WTC11 (cell line): ENCODE measurements at regions of chr1 and their contacts with region 1.

Region 1: DNA sequence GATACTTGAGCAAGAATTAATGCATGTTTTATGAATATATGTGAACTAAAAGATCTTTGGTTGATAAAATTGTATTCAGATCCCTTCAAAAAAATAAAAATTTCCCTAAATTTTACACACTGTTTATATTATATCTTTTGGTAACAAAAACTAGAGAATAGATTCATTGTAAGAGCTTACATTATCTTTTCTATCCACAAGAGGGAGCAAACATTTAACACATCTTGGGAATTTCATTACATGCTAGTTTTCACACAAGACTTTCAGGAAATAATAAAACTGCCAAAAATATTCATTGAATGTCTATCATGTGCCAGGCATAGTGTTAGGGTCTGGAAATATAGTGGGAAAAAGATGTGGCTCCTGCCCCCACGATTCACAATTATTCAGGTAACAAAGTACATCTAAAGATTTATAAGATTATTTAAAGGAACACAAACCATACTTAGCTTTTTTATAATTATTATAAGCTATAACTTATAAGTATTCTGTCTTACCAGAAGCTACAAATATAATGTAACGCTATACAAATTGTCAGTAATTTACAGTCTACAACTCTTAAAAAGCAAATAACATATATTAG is 30.6 kb downstream of the FAF1 start:
- DNase-seq: no peak
- ATAC-seq: no peak
- H3K4me3 Mint-ChIP-seq: no peak overlapping the region
- H3K27ac Mint-ChIP-seq: no peak overlapping the region
- H3K4me1 Mint-ChIP-seq: no peaks in the 10 kb centered on the region; the same call in 1 of the 2 replicates
- H3K27me3 Mint-ChIP-seq: no peaks in the 10 kb centered on the region
- CTCF ChIP-seq: no peak

Region 2: GRCh38 chr1:50959913-50960844 is 30.7 kb after region 1 on chr1 and contains the start of gene FAF1:
- CTCF ChIA-PET with region 1: interaction called, 10 read pairs
- POLR2A ChIA-PET with region 1: no interaction called
- DNase-seq: peak; percentile 98
- ATAC-seq: peak; percentile 93
- H3K4me3 Mint-ChIP-seq: peak within 1 kb of the TSS; percentile 87
- H3K27ac Mint-ChIP-seq: peak within 1 kb of the TSS; percentile 95
- H3K4me1 Mint-ChIP-seq: peaks cover 14% of the 10 kb centered on the region
- H3K27me3 Mint-ChIP-seq: peaks cover 20% of the 10 kb centered on the region
- CTCF ChIP-seq: 0 out of 2 replicates have a peak, but pooled peaks have one; percentile 22
- total RNA-seq, gene FAF1: 50.4 to 53.5 TPM (median 53.5 TPM) in 3 replicates

Region 3: DNA sequence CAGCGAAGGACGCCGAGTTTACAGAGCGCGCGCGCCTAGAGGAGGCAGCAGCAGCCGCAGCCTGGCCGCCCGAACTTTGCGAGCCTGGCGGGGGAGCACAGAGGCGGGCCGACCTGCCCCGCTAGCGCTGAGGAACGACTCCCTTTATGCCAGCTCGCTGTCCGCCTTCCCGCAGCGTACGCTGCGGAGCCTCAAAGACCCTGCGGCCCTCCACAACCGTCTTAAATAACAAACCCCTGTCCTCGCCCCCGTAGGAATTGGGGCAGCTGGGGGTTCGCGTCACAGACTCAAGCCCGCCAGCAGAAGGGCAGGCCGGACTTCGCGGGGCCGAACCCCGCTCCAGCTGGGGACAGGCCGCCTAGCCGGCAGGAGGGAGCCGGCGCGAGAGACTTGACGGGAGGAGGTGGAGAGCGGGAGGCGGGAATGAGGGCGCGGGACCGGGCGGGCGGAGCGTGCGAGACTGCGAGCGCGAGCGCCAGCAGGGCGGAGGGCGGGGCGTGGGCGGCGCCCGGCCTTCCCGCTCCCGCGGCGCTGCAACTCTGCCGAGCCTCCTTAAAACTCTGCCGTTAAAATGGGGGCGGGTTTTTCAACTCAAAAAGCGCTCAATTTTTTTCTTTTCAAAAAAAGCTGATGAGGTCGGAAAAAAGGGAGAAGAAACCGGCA is 38.8 kb after region 1 on chr1:
- CTCF ChIA-PET with region 1: interaction called, 14 read pairs
- POLR2A ChIA-PET with region 1: no interaction called
- DNase-seq: peak; percentile 87
- ATAC-seq: peak; percentile 83
- H3K4me3 Mint-ChIP-seq: peak overlapping the region; percentile 69
- H3K27ac Mint-ChIP-seq: no peak overlapping the region
- H3K4me1 Mint-ChIP-seq: peaks cover 18% of the 10 kb centered on the region
- H3K27me3 Mint-ChIP-seq: peaks cover 94% of the 10 kb centered on the region
- CTCF ChIP-seq: no peak